ENCODE measurements at regions of chr7 and their contacts with region 1.

Region 1: GRCh38 chr7:150378853-150379440 is at the start of gene ZNF775:
- DNase-seq: no peak
- ATAC-seq: peak; percentile 87
- H3K4me3 ChIP-seq: peak within 1 kb of the TSS; percentile 99
- H3K27ac ChIP-seq: peak within 1 kb of the TSS; percentile 97
- H3K4me1 ChIP-seq: peaks cover 75% of the 10 kb centered on the region
- H3K27me3 ChIP-seq: no peaks in the 10 kb centered on the region
- CTCF ChIP-seq: no peak
- EP300 ChIP-seq: no peak
- POLR2A ChIP-seq: peak; percentile 93
- RAD21 ChIP-seq: no peak
- polyA plus RNA-seq, gene ZNF775: 0.05 to 0.46 TPM

Region 2: GRCh38 chr7:150404805-150405583 is 26.0 kb after region 1 on chr7:
- CTCF ChIA-PET with region 1: interaction called, 22 read pairs
- POLR2A ChIA-PET with region 1: interaction called, 89 read pairs
- RAD21 ChIA-PET with region 1: interaction called, 31 read pairs
- SMC1A ChIA-PET with region 1: interaction called, 37 read pairs
- in situ Hi-C with region 1: no loop called
- intact Hi-C with region 1: loop called (anchors 2 kb)
- DNase-seq: no peak
- ATAC-seq: peak; percentile 62
- H3K4me3 ChIP-seq: peak overlapping the region; percentile 91
- H3K27ac ChIP-seq: peak overlapping the region; percentile 89
- H3K4me1 ChIP-seq: peaks cover 58% of the 10 kb centered on the region
- H3K27me3 ChIP-seq: no peaks in the 10 kb centered on the region
- CTCF ChIP-seq: peak; percentile 13 to 39 (median 19); a peak in 4 of 6 replicates
- EP300 ChIP-seq: peak in 1 of 2 experiments; percentile 53; a peak in 1 of 4 replicates
- POLR2A ChIP-seq: peak; percentile 94
- RAD21 ChIP-seq: no peak

Region 3: DNA sequence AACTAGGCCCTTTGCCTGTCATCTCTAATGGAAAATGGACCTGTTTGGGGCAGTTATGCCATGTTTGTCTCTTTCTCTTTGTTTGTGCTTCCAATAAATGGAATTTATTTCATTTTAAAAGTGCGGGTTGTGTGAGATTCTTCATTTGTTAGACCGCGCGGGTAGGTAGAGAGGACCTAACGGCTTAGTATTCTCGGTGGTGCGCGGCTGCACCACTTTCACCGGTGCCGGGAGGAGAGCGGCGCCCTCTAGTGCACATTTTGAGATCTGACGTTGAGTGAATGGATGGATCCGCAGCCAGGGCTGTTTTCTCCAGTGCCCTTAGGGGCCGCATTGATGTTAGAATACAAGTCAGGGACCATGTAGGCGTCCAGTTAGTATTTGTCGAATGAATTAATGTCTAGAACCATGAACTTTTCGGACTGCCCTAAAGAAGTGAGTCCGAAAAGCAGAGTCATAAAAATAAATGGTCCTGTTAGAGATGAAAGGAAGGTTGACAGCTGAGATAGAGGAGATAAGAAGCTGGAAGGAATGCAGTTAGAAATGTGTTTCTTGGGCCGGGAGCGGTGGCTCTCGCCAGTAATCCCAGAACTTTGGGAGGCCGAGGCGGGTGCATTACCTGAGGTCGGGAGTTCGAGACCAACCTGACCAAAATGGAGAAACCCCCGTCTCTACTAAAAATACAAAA is 42.2 kb after region 1 on chr7:
- CTCF ChIA-PET with region 1: interaction called, 7 read pairs
- POLR2A ChIA-PET with region 1: interaction called, 4 read pairs
- RAD21 ChIA-PET with region 1: interaction called, 4 read pairs
- SMC1A ChIA-PET with region 1: interaction called, 11 read pairs
- in situ Hi-C with region 1: no loop called
- intact Hi-C with region 1: loop called (anchors 1 kb)
- DNase-seq: no peak
- ATAC-seq: peak; percentile 100
- H3K4me3 ChIP-seq: no peak overlapping the region
- H3K27ac ChIP-seq: no peak overlapping the region
- H3K4me1 ChIP-seq: peaks cover 2% of the 10 kb centered on the region; the same call in 1 of the 2 replicates
- H3K27me3 ChIP-seq: no peaks in the 10 kb centered on the region
- CTCF ChIP-seq: peak; percentile 86 to 95 (median 88); a peak in 5 of 6 replicates
- EP300 ChIP-seq: no peak
- POLR2A ChIP-seq: no peak
- RAD21 ChIP-seq: peak; percentile 94

Region 4: GRCh38 chr7:150657526-150657925 is 278.6 kb after region 1 on chr7:
- CTCF ChIA-PET with region 1: no interaction called
- POLR2A ChIA-PET with region 1: no interaction called
- RAD21 ChIA-PET with region 1: no interaction called
- SMC1A ChIA-PET with region 1: no interaction called
- in situ Hi-C with region 1: no loop called
- intact Hi-C with region 1: no loop called
- DNase-seq: no peak
- ATAC-seq: no peak
- H3K4me3 ChIP-seq: no peak overlapping the region
- H3K27ac ChIP-seq: no peak overlapping the region
- H3K4me1 ChIP-seq: peaks cover 11% of the 10 kb centered on the region
- H3K27me3 ChIP-seq: no peaks in the 10 kb centered on the region
- CTCF ChIP-seq: no peak
- EP300 ChIP-seq: no peak
- POLR2A ChIP-seq: no peak
- RAD21 ChIP-seq: no peak

Measured in GM12878 (cell line).